ENCODE measurements at regions of chr15 and their contacts with region 1.

Region 1: GRCh38 chr15:65832549-65833364 is 36.5 kb upstream of the RAB11A start:
- DNase-seq: peak; percentile 93 to 94
- H3K4me3 ChIP-seq: no peak overlapping the region
- H3K4me3 Mint-ChIP-seq: peak overlapping the region; percentile 67
- H3K27ac Mint-ChIP-seq: peak overlapping the region; percentile 97
- H3K4me1 ChIP-seq: peaks cover 34% of the 10 kb centered on the region
- H3K4me1 Mint-ChIP-seq: peaks cover 34% of the 10 kb centered on the region
- H3K27me3 ChIP-seq: no peaks in the 10 kb centered on the region
- H3K27me3 Mint-ChIP-seq: no peaks in the 10 kb centered on the region
- CTCF ChIP-seq: peak; percentile 24 to 30

Region 2: DNA sequence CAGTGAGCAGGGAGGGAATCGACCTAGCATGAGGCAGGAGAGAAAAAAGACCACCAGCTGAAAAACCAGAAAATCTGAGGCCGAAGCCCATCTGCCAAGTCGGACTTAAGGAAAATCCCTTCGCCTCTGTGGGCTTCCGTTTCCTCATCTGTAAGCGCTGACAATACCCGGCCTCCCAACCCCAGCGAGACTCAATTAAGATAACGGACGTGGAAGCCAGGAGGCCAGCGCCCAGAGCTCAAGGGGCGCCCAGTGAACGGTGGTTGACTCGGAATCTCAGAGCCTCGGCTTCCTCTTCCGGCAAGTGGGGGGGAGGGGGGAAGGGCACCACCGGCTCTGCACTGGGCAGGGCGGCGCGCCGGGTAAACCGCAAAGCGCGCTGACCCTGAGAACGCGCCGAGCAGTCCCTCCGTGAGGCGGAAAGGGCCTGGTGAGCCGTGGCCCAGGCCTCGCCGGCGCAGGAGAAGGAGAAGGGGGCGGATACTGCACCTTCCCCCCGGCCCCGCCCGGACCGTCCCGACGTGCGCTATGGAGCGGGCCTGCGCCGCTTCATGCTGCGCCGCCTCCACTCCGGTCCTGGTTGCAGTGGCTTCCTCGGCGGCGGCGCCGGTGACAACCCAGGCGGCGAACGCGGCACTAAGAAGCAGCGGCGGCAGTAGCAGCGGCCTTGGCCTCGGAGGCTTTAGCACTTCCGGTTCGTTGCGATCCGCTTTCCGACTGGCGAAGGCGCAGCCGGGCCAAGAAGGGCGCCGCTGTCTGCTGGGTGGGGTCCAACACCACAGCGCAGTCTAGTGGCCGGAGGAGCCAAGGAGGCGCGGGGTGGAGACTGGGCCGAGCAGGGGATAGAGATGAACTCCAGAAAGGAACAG is 315.5 kb before region 1 on chr15 and contains the start of gene DPP8:
- CTCF ChIA-PET with region 1: no interaction called
- POLR2A ChIA-PET with region 1: interaction called, 14 read pairs
- intact Hi-C with region 1: no loop called
- DNase-seq: peak; percentile 93 to 97
- H3K4me3 ChIP-seq: peak within 1 kb of the TSS; percentile 88
- H3K4me3 Mint-ChIP-seq: peak within 1 kb of the TSS; percentile 96
- H3K27ac Mint-ChIP-seq: peak within 1 kb of the TSS; percentile 85
- H3K4me1 ChIP-seq: peaks cover 7% of the 10 kb centered on the region
- H3K4me1 Mint-ChIP-seq: no peaks in the 10 kb centered on the region
- H3K27me3 ChIP-seq: no peaks in the 10 kb centered on the region
- H3K27me3 Mint-ChIP-seq: no peaks in the 10 kb centered on the region
- CTCF ChIP-seq: peak; percentile 43 to 98
- total RNA-seq, gene DPP8: 22.9 and 23.4 TPM in 2 replicates

Region 3: GRCh38 chr15:65638681-65639089 is 194.1 kb before region 1 on chr15:
- CTCF ChIA-PET with region 1: no interaction called
- POLR2A ChIA-PET with region 1: no interaction called
- intact Hi-C with region 1: loop called (anchors 1 kb)
- DNase-seq: peak in 1 of 2 experiments; percentile 67
- H3K4me3 ChIP-seq: no peak overlapping the region
- H3K4me3 Mint-ChIP-seq: no peak overlapping the region
- H3K27ac Mint-ChIP-seq: no peak overlapping the region
- H3K4me1 ChIP-seq: no peaks in the 10 kb centered on the region
- H3K4me1 Mint-ChIP-seq: no peaks in the 10 kb centered on the region
- H3K27me3 ChIP-seq: no peaks in the 10 kb centered on the region
- H3K27me3 Mint-ChIP-seq: no peaks in the 10 kb centered on the region
- CTCF ChIP-seq: peak; percentile 74 to 78

Region 4: GRCh38 chr15:65792130-65792987 is 40.4 kb before region 1 on chr15 and contains the start of gene DENND4A:
- CTCF ChIA-PET with region 1: interaction called, 4 read pairs
- POLR2A ChIA-PET with region 1: interaction called, 8 read pairs
- intact Hi-C with region 1: loop called (anchors 1 kb)
- DNase-seq: peak; percentile 97
- H3K4me3 ChIP-seq: peak within 1 kb of the TSS; percentile 74
- H3K4me3 Mint-ChIP-seq: peak within 1 kb of the TSS; percentile 95
- H3K27ac Mint-ChIP-seq: peak within 1 kb of the TSS; percentile 97
- H3K4me1 ChIP-seq: peaks cover 11% of the 10 kb centered on the region; the same call in 1 of the 2 replicates
- H3K4me1 Mint-ChIP-seq: peaks cover 16% of the 10 kb centered on the region
- H3K27me3 ChIP-seq: no peaks in the 10 kb centered on the region
- H3K27me3 Mint-ChIP-seq: no peaks in the 10 kb centered on the region
- CTCF ChIP-seq: no peak
- total RNA-seq, gene DENND4A: 12.7 and 12.9 TPM in 2 replicates

Region 5: GRCh38 chr15:65856821-65857455 is 24.2 kb after region 1 on chr15:
- CTCF ChIA-PET with region 1: interaction called, 6 read pairs
- POLR2A ChIA-PET with region 1: no interaction called
- intact Hi-C with region 1: loop called (anchors 1 kb)
- DNase-seq: peak; percentile 76 to 78
- H3K4me3 ChIP-seq: no peak overlapping the region
- H3K4me3 Mint-ChIP-seq: no peak overlapping the region
- H3K27ac Mint-ChIP-seq: no peak overlapping the region
- H3K4me1 ChIP-seq: no peaks in the 10 kb centered on the region
- H3K4me1 Mint-ChIP-seq: peaks cover 4% of the 10 kb centered on the region
- H3K27me3 ChIP-seq: no peaks in the 10 kb centered on the region
- H3K27me3 Mint-ChIP-seq: no peaks in the 10 kb centered on the region
- CTCF ChIP-seq: peak; percentile 77 to 78

Region 6: DNA sequence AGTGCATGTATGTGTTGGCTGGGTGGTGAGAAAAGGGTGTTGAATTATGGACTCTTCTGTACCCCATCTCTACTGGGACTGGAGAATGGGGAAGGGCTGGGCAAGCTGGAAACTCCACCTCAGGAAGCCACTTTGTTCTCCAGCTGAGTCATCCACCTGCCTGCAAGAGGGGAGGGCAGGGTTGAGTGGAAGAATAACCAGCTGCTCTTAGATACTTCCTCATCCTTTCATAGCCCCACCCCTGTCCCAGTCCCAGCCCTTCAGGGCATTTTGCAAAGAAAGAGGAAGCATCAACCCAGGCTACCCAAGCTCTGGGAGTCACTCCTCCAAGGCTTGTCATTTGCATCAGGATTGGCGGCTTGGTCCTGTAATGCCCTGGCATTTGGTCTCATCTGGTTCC is 69.6 kb after region 1 on chr15:
- CTCF ChIA-PET with region 1: no interaction called
- POLR2A ChIA-PET with region 1: no interaction called
- intact Hi-C with region 1: loop called (anchors 1 kb)
- DNase-seq: peak; percentile 72 to 86
- H3K4me3 ChIP-seq: no peak overlapping the region
- H3K4me3 Mint-ChIP-seq: peak overlapping the region; percentile 53
- H3K27ac Mint-ChIP-seq: peak overlapping the region; percentile 94
- H3K4me1 ChIP-seq: peaks cover 79% of the 10 kb centered on the region
- H3K4me1 Mint-ChIP-seq: peaks cover 55% of the 10 kb centered on the region
- H3K27me3 ChIP-seq: no peaks in the 10 kb centered on the region
- H3K27me3 Mint-ChIP-seq: no peaks in the 10 kb centered on the region
- CTCF ChIP-seq: no peak